CD4-positive, alpha-beta memory T cell (primary cell): ENCODE measurements at regions of chr6 and their contacts with region 1.

Region 1: DNA sequence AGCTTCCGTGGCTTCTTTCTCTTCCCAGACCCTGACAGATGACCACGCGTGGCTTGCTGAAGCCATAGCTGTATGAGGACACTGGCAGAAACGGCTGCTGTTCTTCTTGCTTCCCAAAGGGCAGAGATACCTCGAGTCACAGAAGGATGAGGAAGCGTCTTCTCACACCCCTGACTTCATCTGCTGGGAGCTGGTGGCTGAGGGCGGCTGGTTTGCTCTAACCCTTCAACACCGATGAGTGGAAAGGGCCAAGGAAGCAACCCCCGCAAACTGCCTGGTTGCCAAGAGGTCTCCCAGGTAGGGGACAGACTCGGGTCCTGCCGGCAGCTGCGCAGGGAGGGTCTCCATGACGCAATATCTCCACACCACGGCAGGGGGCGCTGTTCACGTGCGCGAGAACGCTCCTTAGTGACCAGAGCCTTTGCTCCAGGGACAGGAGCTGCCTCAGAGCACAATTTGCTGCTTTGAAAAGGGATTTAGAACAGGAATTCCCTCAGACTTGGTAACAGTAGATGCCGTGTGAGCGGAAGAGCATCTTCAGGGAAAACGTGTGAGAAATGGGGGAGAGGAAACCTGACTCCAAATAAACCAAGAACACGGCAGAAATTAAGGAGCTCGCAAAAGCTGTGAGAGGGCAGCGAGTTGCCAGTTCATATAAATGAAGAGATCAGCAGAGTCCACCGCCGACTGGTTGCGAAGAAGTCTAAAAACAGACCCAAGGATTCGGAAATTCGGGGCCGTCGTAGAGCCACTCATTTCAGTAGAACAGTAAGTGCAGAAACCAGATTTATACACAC is 80.2 kb downstream of the ERMARD start:
- DNase-seq: peak in 4 of 5 donors; percentile 52 to 56 (median 54)
- H3K4me3 ChIP-seq: no peak overlapping the region
- H3K4me3 Mint-ChIP-seq: no peak overlapping the region
- H3K27ac ChIP-seq: no peak overlapping the region
- H3K27ac Mint-ChIP-seq: peak overlapping the region in 1 of 7 donors; percentile 3
- H3K4me1 ChIP-seq: no peaks in the 10 kb centered on the region
- H3K4me1 Mint-ChIP-seq: peaks cover 0 to 6% (median 4%) of the 10 kb centered on the region in 4 donors
- H3K27me3 ChIP-seq: peaks cover 3% of the 10 kb centered on the region
- H3K27me3 Mint-ChIP-seq: peaks cover 26 to 30% of the 10 kb centered on the region in 2 donors

Region 2: DNA sequence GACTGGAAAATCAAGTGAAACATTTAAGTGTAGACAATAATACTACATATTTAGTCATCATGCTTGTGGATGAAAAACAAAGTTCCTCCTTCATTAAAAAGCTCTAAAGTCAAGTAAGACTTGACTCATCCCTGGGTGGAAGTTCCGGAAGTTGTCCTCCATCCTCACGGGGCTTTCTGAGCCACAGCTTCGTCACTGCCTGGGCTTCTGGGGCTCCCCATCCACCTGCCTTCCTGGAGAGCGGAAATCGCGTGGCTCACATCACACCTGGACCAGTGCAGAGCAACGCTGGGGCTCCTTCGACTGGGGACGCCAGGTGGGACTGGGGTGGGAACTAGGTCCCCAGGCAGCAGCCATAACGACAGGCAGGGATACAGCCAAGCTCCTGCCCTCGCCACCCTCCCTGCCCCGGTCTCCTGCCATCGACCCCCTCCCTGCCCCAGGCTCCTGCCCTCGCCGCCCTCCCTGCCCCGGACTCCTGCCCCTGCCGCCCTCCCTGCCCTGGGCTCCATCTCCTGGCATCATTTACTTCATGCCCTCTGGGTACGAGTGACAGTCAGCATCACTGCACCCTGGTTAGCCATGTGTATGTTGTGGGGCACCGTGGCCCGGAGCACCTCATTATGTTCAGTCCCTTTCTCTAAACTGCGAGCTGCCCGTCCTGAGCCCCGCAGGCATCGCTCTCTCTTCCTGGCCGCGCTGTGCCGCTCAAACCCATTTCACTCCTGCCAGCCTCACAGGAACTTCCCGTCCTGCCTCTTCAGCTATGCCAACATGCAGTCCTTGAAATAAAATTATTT is 590.9 kb before region 1 on chr6:
- CTCF ChIA-PET with region 1: no interaction called
- POLR2A ChIA-PET with region 1: no interaction called
- intact Hi-C with region 1: no loop called
- DNase-seq: no peak
- H3K4me3 ChIP-seq: no peak overlapping the region
- H3K4me3 Mint-ChIP-seq: no peak overlapping the region
- H3K27ac ChIP-seq: no peak overlapping the region
- H3K27ac Mint-ChIP-seq: no peak overlapping the region
- H3K4me1 ChIP-seq: no peaks in the 10 kb centered on the region
- H3K4me1 Mint-ChIP-seq: no peaks in the 10 kb centered on the region
- H3K27me3 ChIP-seq: no peaks in the 10 kb centered on the region
- H3K27me3 Mint-ChIP-seq: peaks cover 0 to 3% of the 10 kb centered on the region in 2 donors

Region 3: GRCh38 chr6:169800668-169801395 is 30.8 kb before region 1 on chr6:
- CTCF ChIA-PET with region 1: interaction called, 13 read pairs
- POLR2A ChIA-PET with region 1: no interaction called
- intact Hi-C with region 1: no loop called
- DNase-seq: no peak
- H3K4me3 ChIP-seq: no peak overlapping the region
- H3K4me3 Mint-ChIP-seq: no peak overlapping the region
- H3K27ac ChIP-seq: no peak overlapping the region
- H3K27ac Mint-ChIP-seq: no peak overlapping the region
- H3K4me1 ChIP-seq: peaks cover 27% of the 10 kb centered on the region
- H3K4me1 Mint-ChIP-seq: peaks cover 31 to 33% (median 31%) of the 10 kb centered on the region in 4 donors
- H3K27me3 ChIP-seq: no peaks in the 10 kb centered on the region
- H3K27me3 Mint-ChIP-seq: peaks cover 20 to 24% of the 10 kb centered on the region in 2 donors

Region 4: GRCh38 chr6:169841907-169842606 is 10.4 kb after region 1 on chr6:
- CTCF ChIA-PET with region 1: interaction called, 13 read pairs
- POLR2A ChIA-PET with region 1: no interaction called
- intact Hi-C with region 1: no loop called
- DNase-seq: no peak
- H3K4me3 ChIP-seq: no peak overlapping the region
- H3K4me3 Mint-ChIP-seq: no peak overlapping the region
- H3K27ac ChIP-seq: no peak overlapping the region
- H3K27ac Mint-ChIP-seq: no peak overlapping the region
- H3K4me1 ChIP-seq: no peaks in the 10 kb centered on the region
- H3K4me1 Mint-ChIP-seq: no peaks in the 10 kb centered on the region
- H3K27me3 ChIP-seq: no peaks in the 10 kb centered on the region
- H3K27me3 Mint-ChIP-seq: peaks cover 2 to 3% of the 10 kb centered on the region in 2 donors

Region 5: GRCh38 chr6:169930799-169931198 is 99.2 kb after region 1 on chr6:
- CTCF ChIA-PET with region 1: interaction called, 10 read pairs
- POLR2A ChIA-PET with region 1: no interaction called
- intact Hi-C with region 1: no loop called
- DNase-seq: peak in 1 of 5 donors; percentile 11
- H3K4me3 ChIP-seq: no peak overlapping the region
- H3K4me3 Mint-ChIP-seq: no peak overlapping the region
- H3K27ac ChIP-seq: no peak overlapping the region
- H3K27ac Mint-ChIP-seq: no peak overlapping the region
- H3K4me1 ChIP-seq: no peaks in the 10 kb centered on the region
- H3K4me1 Mint-ChIP-seq: no peaks in the 10 kb centered on the region
- H3K27me3 ChIP-seq: no peaks in the 10 kb centered on the region
- H3K27me3 Mint-ChIP-seq: peaks cover 8 to 15% of the 10 kb centered on the region in 2 donors